Spleen (tissue), 13 donors: ENCODE measurements at regions of chr4 and their contacts with region 1.

Region 1: DNA sequence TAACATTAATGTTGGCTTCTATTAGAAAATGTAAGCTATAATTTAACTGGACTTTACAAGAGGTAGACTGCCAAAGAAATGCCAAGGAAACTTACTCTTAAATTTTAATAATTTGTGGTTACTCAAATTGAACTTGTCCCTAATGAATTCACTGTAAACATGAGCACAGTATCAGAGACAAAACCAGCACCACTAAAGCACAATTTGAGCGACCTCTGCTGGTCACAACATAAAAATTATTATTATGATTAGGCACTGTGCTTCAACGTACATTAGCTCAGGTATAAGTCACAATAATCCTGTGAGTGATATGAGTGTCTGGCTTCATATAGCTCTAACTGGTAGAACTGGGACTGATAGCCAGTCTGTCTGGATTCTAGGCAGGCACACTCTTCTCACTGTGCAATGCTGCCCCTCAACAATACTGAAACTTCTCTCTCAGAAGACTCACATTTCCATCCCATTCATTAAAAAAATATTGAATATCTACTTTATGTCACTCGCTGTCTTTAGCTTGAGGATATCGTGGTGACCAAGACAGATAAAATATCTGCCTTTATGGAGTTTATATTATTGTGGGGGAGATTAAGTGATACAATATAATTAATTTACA is 8.0 kb downstream of the NUDT6 start:
- DNase-seq: no peak
- H3K4me3 ChIP-seq: no peak overlapping the region
- H3K27ac ChIP-seq: no peak overlapping the region
- H3K4me1 ChIP-seq: no peaks in the 10 kb centered on the region
- H3K27me3 ChIP-seq: no peaks in the 10 kb centered on the region
- CTCF ChIP-seq: peak in 2 of 11 experiments; percentile 6 to 34
- POLR2A ChIP-seq: no peak

Region 2: GRCh38 chr4:122489061-122489460 is 425.3 kb before region 1 on chr4:
- intact Hi-C with region 1: no loop called
- DNase-seq: no peak
- H3K4me3 ChIP-seq: no peak overlapping the region
- H3K27ac ChIP-seq: no peak overlapping the region
- H3K4me1 ChIP-seq: no peaks in the 10 kb centered on the region
- H3K27me3 ChIP-seq: no peaks in the 10 kb centered on the region
- CTCF ChIP-seq: no peak
- POLR2A ChIP-seq: no peak

Region 3: DNA sequence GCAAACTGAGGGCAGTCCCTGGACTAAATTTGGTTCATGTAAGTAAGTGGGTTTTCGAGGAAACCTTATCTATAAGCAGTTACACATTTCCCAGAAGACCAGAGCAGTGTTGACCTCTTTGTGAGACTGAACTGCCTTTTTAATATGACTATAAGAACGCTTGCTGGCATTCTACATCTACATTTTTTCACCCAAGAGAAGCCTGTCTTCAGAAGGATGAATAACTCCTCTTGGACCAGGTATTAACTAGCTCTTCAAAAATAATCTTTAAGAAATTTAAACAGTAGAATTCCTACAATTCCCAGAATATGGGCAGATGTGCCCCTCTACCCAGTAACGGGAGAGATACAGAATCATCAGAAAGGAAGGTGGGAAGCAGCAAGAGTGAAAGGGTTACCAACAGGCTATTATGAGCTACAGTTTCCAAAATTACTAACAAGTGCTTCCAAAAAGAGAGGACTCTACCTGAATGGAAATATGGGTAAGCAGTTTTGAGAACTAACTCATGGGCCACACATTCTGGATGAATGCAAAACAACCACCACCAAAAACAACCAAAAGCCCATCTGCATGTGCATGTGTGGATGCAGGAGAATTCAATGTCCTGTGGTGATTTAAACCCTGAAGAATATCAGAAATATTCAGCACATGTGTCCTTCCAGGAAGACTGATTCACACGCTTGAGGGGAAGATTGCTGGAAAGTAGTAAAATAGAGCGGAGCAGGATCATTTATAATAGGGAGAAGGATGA is 164.5 kb before region 1 on chr4:
- intact Hi-C with region 1: loop called (anchors 5 kb)
- DNase-seq: no peak
- H3K4me3 ChIP-seq: no peak overlapping the region
- H3K27ac ChIP-seq: no peak overlapping the region
- H3K4me1 ChIP-seq: no peaks in the 10 kb centered on the region
- H3K27me3 ChIP-seq: peaks cover 0 to 19% (median 0%) of the 10 kb centered on the region in 7 donors
- CTCF ChIP-seq: no peak
- POLR2A ChIP-seq: no peak

Region 4: GRCh38 chr4:123444290-123444731 is 529.9 kb after region 1 on chr4:
- intact Hi-C with region 1: no loop called
- DNase-seq: no peak
- H3K4me3 ChIP-seq: peak overlapping the region in 3 of 8 donors; percentile 12 to 44 (median 14)
- H3K27ac ChIP-seq: peak overlapping the region; percentile 40 to 84 (median 72)
- H3K4me1 ChIP-seq: peaks cover 15 to 59% (median 34%) of the 10 kb centered on the region in 6 donors
- H3K27me3 ChIP-seq: no peaks in the 10 kb centered on the region
- CTCF ChIP-seq: no peak
- POLR2A ChIP-seq: no peak

Region 5: GRCh38 chr4:124907881-124908280 is 1993.5 kb after region 1 on chr4:
- intact Hi-C with region 1: no loop called
- DNase-seq: no peak
- H3K4me3 ChIP-seq: no peak overlapping the region
- H3K27ac ChIP-seq: no peak overlapping the region
- H3K4me1 ChIP-seq: no peaks in the 10 kb centered on the region
- H3K27me3 ChIP-seq: no peaks in the 10 kb centered on the region
- CTCF ChIP-seq: no peak
- POLR2A ChIP-seq: no peak